Cardiac septum (tissue), 1 donor: ENCODE measurements at regions of chr1 and their contacts with region 1.

Region 1: DNA sequence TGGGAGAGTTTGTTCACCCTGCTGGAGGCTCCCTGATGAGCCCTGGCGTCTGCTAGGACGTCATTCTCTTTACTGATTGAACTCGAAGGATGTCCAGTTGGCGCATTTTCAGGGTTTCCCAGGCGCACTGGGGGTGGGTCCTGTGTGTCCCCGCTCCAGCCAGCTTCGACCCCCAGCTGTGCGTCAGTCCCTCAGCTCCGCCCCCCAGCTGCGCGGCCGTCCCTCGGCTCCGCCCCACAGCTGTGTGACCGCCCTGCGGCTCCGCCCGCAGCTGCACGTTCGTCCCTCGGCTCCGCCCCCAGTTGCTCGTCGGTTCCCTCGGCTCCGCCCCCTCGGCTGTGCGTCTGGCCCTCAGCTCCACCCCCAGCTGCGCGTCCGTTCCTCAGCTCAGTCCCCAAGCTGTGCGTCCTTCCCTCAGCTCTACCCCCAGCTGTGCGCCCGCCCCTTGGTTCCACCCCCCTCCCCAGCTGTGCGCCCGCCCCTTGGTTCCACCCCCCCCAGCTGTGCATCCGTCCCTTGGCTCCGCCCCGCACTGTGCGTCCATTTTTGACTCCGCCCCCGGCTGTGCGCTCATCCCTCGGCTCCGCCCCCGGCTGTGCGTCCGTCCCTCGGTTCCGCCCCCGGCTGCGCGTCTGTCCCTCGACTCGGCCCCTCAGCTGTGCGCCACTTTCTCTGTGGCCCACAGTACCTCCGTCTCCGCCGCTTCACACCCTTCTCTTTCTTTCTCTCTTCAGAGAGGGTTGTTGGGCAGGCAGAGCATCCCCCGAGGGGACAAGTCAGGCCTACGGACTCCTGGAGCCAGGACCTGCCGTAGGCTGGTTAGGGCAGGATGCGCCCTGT is 61.3 kb downstream of the FAAP20 start:
- DNase-seq: peak; percentile 99

Region 2: GRCh38 chr1:2174348-2175054 is 41.2 kb after region 1 on chr1:
- intact Hi-C with region 1: loop called (anchors 5 kb)
- DNase-seq: peak; percentile 87

Region 3: DNA sequence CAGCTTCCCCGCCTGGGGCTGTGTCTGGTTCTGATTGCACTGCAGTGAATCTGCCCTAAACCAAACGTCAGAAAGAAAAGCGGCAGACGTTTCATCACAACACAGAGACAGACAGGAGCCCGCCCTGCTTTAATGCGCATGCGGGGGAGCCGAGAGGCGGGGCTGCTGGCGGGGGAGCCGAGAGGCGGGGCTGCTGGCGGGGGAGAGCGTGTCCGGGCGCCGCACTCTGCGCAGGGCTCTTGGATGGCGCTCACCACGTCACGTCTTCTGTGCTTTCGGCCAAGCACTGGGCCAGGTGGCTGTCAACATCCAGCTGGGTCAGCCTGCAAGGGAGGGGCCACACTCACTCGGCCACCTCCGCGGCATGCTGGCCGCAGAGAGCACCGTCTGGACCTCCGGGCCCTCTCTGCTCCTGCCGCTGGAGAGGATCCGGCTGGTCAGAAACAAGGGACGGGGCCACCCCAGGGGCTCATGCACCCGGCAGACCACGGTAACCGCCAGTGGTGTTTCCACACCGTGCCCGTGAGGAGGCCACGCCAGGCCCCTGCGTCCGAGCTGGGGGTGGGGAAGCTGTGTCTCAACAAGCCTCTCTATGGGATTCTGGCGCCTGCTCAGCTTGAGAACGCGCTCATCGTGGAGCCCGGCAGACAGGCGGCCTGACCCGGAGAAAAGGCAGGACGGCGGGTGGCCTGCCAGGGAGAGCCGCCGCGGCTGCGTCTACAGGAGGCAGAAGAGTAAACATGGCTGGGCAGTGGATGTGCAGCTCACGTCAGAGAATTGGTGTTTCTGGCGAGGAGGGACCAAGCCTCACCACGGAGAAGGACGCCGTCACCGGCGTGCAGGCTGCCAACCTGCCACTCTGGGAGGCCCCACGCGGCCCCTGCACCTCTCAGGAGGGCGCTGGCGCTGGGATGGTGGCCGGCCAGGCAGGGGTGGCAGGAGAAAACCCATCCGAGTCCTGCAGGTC is 56.5 kb after region 1 on chr1:
- intact Hi-C with region 1: loop called (anchors 2 kb)
- DNase-seq: peak; percentile 99